ENCODE measurements at regions of chr21 and their contacts with region 1.

Region 1: GRCh38 chr21:42107881-42108553 is 36.9 kb downstream of the UMODL1 start:
- DNase-seq: peak; percentile 92
- CTCF ChIP-seq: peak; percentile 92

Region 2: GRCh38 chr21:41612674-41613532 is 495.1 kb before region 1 on chr21:
- in situ Hi-C with region 1: loop called (anchors 25 kb)
- DNase-seq: peak; percentile 70
- CTCF ChIP-seq: peak; percentile 48

Measured in GM13976 (cell line).